Ascending aorta (tissue), 2 donors: ENCODE measurements at regions of chr3 and their contacts with region 1.

Region 1: GRCh38 chr3:194824701-194825111 is 139.0 kb downstream of the FAM43A start:
- DNase-seq: no peak
- H3K4me3 ChIP-seq: no peak overlapping the region
- H3K27ac ChIP-seq: no peak overlapping the region
- H3K4me1 ChIP-seq: no peaks in the 10 kb centered on the region
- H3K27me3 ChIP-seq: no peaks in the 10 kb centered on the region
- CTCF ChIP-seq: no peak

Region 2: GRCh38 chr3:195059006-195059350 is 234.3 kb after region 1 on chr3:
- intact Hi-C with region 1: loop called (anchors 10 kb)
- DNase-seq: no peak
- H3K4me3 ChIP-seq: no peak overlapping the region
- H3K27ac ChIP-seq: no peak overlapping the region
- H3K4me1 ChIP-seq: no peaks in the 10 kb centered on the region
- H3K27me3 ChIP-seq: no peaks in the 10 kb centered on the region
- CTCF ChIP-seq: no peak